Activated CD4-positive, alpha-beta T cell treated with anti-CD3 and anti-CD28 coated beads, Interleukin-2, amount 10 ng/mL, durations not matched to agents 7 days and 5 days (primary cell): ENCODE measurements at regions of chr3 and their contacts with region 1.

Region 1: GRCh38 chr3:50314342-50314741 is 8.2 kb downstream of the HYAL2 start:
- DNase-seq: no peak
- H3K4me3 Mint-ChIP-seq: no peak overlapping the region
- H3K27ac Mint-ChIP-seq: no peak overlapping the region
- H3K4me1 Mint-ChIP-seq: peaks cover 28% of the 10 kb centered on the region
- H3K27me3 Mint-ChIP-seq: no peaks in the 10 kb centered on the region

Region 2: DNA sequence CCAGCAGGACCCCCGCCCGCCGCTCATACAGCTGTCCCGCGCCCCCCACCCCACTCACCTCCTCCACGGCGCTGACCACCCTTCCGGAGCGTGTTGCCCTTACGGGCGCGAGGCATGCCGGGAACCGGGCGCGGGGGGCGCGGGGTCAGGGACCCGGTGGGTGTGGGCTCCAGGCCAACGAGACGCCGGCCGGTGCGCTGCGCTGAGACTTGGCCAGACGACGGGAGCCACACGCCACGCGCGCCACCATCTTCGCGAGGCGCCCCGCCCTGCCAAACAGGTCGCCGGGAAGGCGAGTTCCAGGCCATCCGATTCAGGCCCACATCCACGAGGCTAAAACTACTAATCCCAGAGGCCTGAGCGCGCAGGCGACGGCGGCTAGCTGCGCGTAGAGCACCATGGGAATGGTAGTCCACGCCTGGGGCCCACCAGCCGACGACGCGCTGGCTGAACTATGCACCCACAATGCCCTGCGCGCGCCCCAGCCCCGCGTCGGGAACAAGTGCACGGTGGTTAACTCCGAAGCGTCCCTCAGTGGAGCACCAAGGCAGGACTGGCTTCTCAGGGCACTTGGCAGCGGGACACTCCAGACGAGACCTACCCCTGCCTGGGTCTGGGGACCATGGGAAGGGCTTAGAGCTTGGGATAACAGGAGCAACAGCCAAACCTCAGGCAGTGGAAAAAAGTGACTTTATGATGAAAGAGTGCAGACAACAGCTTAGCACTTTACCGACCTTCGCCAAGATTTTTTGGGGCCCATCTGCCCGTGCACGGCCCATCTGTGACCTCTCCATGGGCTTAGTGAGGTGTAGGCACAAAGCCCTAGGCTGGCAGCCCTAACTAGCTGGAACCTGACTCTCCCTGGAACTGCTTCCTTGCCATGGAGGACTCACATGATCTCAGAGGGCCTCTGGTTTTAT is 21.9 kb before region 1 on chr3 and contains the start of gene IFRD2:
- CTCF ChIA-PET with region 1: interaction called, 11 read pairs
- POLR2A ChIA-PET with region 1: no interaction called
- DNase-seq: peak; percentile 98
- H3K4me3 Mint-ChIP-seq: peak within 1 kb of the TSS; percentile 88
- H3K27ac Mint-ChIP-seq: peak within 1 kb of the TSS; percentile 95
- H3K4me1 Mint-ChIP-seq: peaks cover 27% of the 10 kb centered on the region
- H3K27me3 Mint-ChIP-seq: no peaks in the 10 kb centered on the region
- total RNA-seq, gene IFRD2: 59.4 to 66.0 TPM